ENCODE measurements at regions of chr2 and their contacts with region 1.

Region 1: DNA sequence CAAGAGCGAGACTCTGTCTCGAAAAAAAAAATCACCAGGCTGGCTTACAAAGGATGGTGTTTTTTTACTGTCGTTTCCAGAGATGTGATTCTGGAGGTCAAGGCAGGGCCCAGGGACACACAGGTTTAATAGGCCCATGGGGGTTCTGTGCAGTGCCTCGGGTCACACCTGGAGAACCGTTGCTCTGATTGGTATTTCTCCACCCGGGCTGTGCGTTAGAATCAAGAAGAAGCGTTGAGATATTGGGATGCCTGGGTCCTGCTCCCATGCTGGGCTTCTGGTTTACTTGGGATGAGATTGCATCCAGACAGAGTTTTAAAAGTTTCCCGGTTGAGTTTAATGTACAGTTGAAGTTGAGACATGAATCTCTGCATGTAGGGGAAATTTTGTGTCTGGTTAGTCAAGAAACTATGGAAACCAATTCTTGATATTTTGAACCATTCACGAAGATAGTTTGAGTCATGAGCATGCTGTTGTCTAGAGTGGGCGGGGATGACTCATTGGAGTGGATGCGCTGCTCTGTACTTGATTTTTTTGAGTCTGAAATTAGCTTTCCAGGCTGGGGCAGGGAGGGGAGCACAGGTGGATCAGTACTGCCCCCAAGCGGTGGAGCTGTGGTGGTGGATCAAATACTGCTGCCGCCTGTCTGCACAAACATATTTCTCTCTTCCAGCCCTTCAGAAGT is 50.1 kb downstream of the GREB1 start:
- DNase-seq: peak; percentile 97
- ATAC-seq: peak; percentile 95
- H3K4me3 Mint-ChIP-seq: no peak overlapping the region
- H3K27ac Mint-ChIP-seq: no peak overlapping the region
- H3K4me1 Mint-ChIP-seq: peaks cover 14% of the 10 kb centered on the region
- H3K27me3 Mint-ChIP-seq: peaks cover 1% of the 10 kb centered on the region
- CTCF ChIP-seq: peak; percentile 80

Region 2: DNA sequence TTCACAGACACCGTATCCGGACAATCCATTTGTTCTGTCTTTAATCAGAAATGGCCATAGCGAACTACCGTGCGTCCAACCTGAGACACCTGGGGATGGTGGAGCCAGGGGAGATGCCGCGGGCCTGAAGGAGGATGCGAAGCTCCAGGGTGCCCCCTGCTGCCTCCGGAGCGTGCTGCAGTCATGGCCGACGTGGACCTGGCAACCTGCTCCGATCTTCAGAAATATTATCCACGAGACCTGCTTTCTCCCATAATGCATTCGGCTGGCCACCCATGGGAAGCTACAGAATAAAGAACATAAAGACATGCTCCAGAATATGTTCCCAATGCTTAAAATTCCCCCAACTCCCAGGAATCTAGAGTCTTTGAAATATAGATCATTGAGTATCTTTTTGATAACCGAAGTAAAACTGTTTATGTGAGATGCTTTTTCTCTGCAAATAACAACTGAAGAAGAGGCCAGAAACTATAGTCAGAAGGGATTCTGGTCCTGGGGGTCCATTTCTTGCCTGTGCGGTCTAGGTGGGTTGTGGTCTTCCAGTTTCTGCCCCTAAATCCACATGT is 459.4 kb before region 1 on chr2:
- CTCF ChIA-PET with region 1: interaction called, 94 read pairs
- POLR2A ChIA-PET with region 1: no interaction called
- intact Hi-C with region 1: loop called (anchors 2 kb)
- DNase-seq: peak; percentile 83
- ATAC-seq: peak; percentile 89
- H3K4me3 Mint-ChIP-seq: no peak overlapping the region
- H3K27ac Mint-ChIP-seq: no peak overlapping the region
- H3K4me1 Mint-ChIP-seq: peaks cover 2% of the 10 kb centered on the region
- H3K27me3 Mint-ChIP-seq: no peaks in the 10 kb centered on the region
- CTCF ChIP-seq: peak; percentile 88

Region 3: GRCh38 chr2:11239666-11240462 is 344.1 kb before region 1 on chr2:
- CTCF ChIA-PET with region 1: interaction called, 8 read pairs
- POLR2A ChIA-PET with region 1: no interaction called
- intact Hi-C with region 1: loop called (anchors 5 kb)
- DNase-seq: no peak
- ATAC-seq: no peak
- H3K4me3 Mint-ChIP-seq: no peak overlapping the region
- H3K27ac Mint-ChIP-seq: no peak overlapping the region
- H3K4me1 Mint-ChIP-seq: peaks cover 7% of the 10 kb centered on the region
- H3K27me3 Mint-ChIP-seq: no peaks in the 10 kb centered on the region
- CTCF ChIP-seq: no peak

Region 4: GRCh38 chr2:11465497-11466406 is 118.2 kb before region 1 on chr2 and contains the start of gene E2F6:
- CTCF ChIA-PET with region 1: interaction called, 28 read pairs
- POLR2A ChIA-PET with region 1: interaction called, 3 read pairs
- intact Hi-C with region 1: no loop called
- DNase-seq: peak; percentile 88
- ATAC-seq: peak; percentile 82
- H3K4me3 Mint-ChIP-seq: peak within 1 kb of the TSS; percentile 86
- H3K27ac Mint-ChIP-seq: peak within 1 kb of the TSS; percentile 86
- H3K4me1 Mint-ChIP-seq: peaks cover 47% of the 10 kb centered on the region
- H3K27me3 Mint-ChIP-seq: no peaks in the 10 kb centered on the region
- CTCF ChIP-seq: no peak
- total RNA-seq, gene E2F6: 9.8 to 10.5 TPM

Region 5: DNA sequence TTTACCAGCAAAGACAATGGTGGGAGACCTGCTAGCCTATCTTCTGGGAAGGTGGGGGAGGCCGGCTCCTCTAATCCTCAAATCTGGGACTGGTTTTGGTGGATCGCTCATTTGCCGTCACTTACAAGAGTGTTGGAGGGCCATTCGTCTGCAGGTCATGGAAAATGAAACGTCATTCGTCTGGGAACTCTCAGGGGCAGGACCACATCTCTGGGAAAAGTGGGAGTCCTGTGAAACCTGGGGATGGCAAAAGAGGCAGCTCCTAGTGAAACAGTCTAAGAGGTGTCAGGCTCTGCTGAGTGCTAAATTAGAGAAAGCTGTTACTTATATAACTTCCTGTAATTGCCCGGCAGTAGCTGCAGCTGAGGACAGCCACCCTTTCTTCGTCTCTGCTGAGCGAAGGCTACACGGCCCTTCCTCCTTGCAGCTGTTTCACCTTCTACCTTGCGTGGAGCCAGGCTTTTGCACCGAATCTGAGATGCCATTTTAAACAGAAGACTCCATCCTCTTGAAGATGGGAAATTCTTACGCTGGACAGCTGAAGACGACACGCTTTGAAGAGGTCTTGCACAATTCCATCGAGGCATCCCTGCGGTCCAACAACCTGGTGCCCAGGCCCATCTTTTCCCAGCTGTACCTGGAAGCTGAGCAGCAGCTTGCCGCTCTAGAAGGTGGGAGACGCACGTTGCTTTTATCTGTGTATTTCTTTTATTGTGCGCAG is 27.7 kb before region 1 on chr2:
- CTCF ChIA-PET with region 1: interaction called, 28 read pairs
- POLR2A ChIA-PET with region 1: interaction called, 3 read pairs
- intact Hi-C with region 1: no loop called
- DNase-seq: no peak
- ATAC-seq: no peak
- H3K4me3 Mint-ChIP-seq: no peak overlapping the region
- H3K27ac Mint-ChIP-seq: no peak overlapping the region
- H3K4me1 Mint-ChIP-seq: peaks cover 5% of the 10 kb centered on the region
- H3K27me3 Mint-ChIP-seq: peaks cover 34% of the 10 kb centered on the region
- CTCF ChIP-seq: no peak

Region 6: DNA sequence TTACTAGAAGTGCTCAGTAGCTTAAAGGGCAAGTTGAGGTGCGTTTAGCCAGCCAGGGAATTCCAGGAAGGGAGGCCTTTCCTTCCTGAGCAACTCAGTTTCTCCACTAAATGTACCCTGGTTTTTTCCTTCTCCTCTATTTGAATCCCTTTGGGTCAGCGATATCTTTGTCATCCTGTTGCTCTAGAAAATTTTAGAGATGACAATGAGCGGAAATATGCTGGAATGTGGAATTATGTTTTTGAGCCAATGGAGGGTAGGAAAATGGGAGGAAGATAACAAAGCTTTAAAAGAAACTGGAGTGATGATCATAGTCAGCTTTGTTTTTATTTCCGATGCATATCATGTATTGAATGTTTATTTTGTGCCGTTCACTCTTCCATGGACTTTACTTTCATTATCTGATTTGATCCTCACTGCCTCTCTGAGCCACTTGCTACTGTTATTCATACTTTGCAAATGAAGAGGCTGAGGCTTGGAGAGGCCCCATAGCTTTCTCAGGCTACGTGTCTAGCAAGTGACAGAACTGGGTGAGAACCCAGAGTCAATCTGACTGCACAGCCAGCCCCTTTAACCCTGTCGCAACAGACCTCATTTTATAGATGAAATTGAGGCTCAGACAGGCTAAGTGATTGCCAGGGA is 18.7 kb after region 1 on chr2:
- CTCF ChIA-PET with region 1: interaction called, 36 read pairs
- POLR2A ChIA-PET with region 1: no interaction called
- intact Hi-C with region 1: no loop called
- DNase-seq: no peak
- ATAC-seq: no peak
- H3K4me3 Mint-ChIP-seq: no peak overlapping the region
- H3K27ac Mint-ChIP-seq: no peak overlapping the region
- H3K4me1 Mint-ChIP-seq: no peaks in the 10 kb centered on the region
- H3K27me3 Mint-ChIP-seq: no peaks in the 10 kb centered on the region
- CTCF ChIP-seq: no peak